GM18951 (cell line): ENCODE measurements at regions of chr18 and their contacts with region 1.

Region 1: DNA sequence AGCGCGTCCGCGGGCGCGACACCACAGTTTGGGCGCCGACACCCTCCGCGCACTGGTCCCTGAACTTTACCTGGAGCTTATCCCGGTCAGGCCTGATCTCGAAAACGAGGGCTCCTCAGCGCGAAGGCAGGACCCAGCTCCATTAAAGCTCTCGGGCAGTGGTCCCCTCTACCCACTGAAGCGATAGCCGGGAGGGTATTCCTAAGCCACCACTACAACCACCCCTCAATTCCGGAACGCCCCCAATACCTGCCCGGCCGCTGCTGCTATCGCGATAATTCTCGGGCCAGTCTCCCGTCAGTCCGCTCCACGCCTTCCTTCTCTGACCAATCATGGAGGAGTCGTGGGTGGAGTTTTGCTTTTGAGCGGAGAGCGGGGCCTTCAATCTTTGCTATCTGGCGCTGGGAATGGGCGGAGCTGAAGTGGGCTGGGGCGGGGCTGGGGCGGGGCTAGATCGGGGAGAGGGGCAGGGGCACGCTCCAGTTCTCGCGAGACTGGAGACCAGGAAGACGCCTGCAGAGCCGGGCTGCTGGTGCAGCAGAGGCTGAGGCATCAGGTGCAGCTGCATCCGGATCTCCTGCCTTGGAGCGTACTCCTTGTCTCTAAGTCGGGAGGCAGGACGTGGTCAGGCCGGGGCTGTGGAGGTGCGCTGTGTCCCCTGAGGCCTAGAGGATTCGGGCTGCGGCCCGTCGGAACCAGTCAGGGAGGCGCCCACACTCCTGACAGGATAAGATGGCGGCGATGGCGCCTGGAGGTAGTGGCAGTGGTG is at the starts of genes PIGN and RELCH:
- POLR2A ChIP-seq: peak; percentile 93

Region 2: DNA sequence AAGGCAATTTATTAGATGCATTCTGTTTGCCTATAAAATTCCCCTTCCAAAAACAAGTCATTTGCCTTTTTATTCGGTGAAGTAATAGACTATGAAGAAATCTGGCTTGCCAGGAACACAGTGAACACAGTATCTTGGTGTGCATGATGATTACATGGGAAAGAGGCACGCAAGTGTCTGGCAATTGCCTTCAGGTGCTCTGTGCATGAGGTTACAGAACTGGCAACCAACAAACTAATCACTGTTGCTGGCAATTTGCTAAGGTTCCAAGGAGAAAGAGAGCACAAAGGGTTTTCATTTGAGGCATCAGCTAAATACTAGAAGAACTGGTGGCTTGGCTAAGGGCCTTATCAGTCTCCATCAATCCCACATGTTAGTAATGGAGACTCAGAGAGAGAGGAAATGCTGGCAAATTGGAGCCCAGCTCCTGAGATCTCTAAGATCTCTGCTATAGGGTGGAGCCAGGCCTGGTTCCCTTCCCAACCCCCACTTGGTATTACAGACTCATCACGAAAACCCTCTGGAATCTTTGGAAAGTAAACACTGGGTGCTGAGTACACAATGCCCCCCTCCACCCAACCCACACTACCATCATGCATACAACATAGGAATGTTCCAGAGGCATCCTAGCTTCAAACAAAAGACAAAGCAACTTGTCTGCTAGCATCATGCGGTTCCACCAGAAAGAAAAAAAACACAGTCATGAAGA is 304.5 kb before region 1 on chr18:
- in situ Hi-C with region 1: no loop called
- POLR2A ChIP-seq: no peak

Region 3: DNA sequence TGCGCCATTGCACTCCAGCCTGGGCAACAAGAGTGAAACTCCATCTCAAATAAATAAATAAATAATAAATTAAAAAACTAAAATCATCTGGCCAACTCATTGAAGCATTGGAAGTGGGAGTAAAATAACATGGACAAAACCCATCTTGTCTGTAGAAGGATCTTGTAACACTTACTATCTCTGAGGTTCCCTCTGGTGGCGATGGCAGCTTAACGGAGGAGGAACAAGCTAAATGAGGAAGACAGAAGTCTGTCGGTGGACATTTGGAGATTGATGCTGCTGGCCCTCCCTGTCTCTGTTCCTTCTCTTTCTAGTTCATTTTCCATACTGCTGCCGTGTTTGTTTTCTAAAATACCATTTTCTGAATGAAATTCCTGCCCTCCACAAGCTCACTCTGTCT is 379.2 kb after region 1 on chr18:
- in situ Hi-C with region 1: loop called (anchors 25 kb)
- POLR2A ChIP-seq: no peak